Activated CD4-positive, alpha-beta T cell treated with anti-CD3 and anti-CD28 coated beads for 36 hours (primary cell): ENCODE measurements at regions of chr14 and their contacts with region 1.

Region 1: GRCh38 chr14:64279704-64280668 is 14.2 kb downstream of the ESR2 start:
- DNase-seq: peak; percentile 38
- ATAC-seq: peak; percentile 88
- H3K4me3 Mint-ChIP-seq: no peak overlapping the region
- H3K27ac Mint-ChIP-seq: no peak overlapping the region
- H3K4me1 Mint-ChIP-seq: peaks cover 22% of the 10 kb centered on the region
- H3K27me3 Mint-ChIP-seq: no peaks in the 10 kb centered on the region

Region 2: GRCh38 chr14:64109821-64110554 is 170.0 kb before region 1 on chr14:
- CTCF ChIA-PET with region 1: no interaction called
- POLR2A ChIA-PET with region 1: no interaction called
- intact Hi-C with region 1: no loop called
- DNase-seq: no peak
- ATAC-seq: no peak
- H3K4me3 Mint-ChIP-seq: no peak overlapping the region
- H3K27ac Mint-ChIP-seq: no peak overlapping the region
- H3K4me1 Mint-ChIP-seq: no peaks in the 10 kb centered on the region
- H3K27me3 Mint-ChIP-seq: no peaks in the 10 kb centered on the region

Region 3: GRCh38 chr14:64232095-64232838 is 47.7 kb before region 1 on chr14:
- CTCF ChIA-PET with region 1: no interaction called
- POLR2A ChIA-PET with region 1: no interaction called
- intact Hi-C with region 1: loop called in 1 of 2 experiments (anchors 5 kb)
- DNase-seq: peak; percentile 42
- ATAC-seq: peak; percentile 76
- H3K4me3 Mint-ChIP-seq: no peak overlapping the region
- H3K27ac Mint-ChIP-seq: no peak overlapping the region
- H3K4me1 Mint-ChIP-seq: peaks cover 14% of the 10 kb centered on the region
- H3K27me3 Mint-ChIP-seq: no peaks in the 10 kb centered on the region

Region 4: GRCh38 chr14:64421166-64421565 is 141.2 kb after region 1 on chr14:
- CTCF ChIA-PET with region 1: no interaction called
- POLR2A ChIA-PET with region 1: no interaction called
- intact Hi-C with region 1: no loop called
- DNase-seq: no peak
- ATAC-seq: no peak
- H3K4me3 Mint-ChIP-seq: no peak overlapping the region
- H3K27ac Mint-ChIP-seq: no peak overlapping the region
- H3K4me1 Mint-ChIP-seq: peaks cover 12% of the 10 kb centered on the region
- H3K27me3 Mint-ChIP-seq: no peaks in the 10 kb centered on the region

Region 5: DNA sequence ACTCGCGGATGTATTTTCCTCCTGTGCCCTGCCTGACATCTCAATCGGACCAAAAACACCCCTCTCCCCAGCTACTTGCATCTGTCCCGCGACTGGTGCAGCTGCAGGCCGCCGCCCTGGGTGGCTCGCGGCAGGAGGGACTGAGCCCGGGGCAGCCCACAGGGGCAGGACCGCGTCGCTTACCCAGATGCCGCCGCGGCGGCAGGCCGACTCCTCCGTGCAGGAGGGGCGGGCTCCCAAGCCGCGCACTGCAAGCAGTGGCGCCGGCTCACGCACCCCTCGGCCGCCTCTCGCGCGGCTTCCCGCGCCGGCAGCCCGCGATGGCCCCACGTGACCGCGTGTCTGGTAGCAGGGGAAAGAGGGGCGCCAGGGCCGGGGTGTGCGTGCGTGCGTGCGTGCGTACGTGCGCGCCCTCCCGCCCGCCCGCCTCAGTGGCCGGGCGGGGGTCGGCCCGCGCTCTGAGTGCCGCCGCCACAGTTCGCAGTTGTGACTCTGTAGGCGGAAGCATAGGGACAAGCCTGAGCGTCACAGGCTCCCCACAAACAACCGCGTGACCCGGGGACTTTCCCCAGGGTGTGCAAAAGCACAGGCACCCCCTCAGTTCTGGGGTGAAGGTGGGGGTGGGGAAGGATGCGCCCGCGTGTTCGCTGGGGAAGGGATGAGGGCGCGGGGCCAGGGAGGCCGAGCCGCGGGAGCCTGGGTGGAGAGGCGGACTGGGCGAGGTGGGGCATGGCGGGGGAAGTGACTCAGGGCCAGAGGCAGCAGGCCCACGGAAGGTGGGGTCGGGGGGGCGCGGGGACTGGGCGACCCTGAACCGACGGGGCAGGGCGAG is 223.7 kb after region 1 on chr14 and contains the start of gene ZBTB25:
- CTCF ChIA-PET with region 1: no interaction called
- POLR2A ChIA-PET with region 1: no interaction called
- intact Hi-C with region 1: no loop called
- DNase-seq: peak; percentile 97
- ATAC-seq: peak; percentile 66
- H3K4me3 Mint-ChIP-seq: peak within 1 kb of the TSS; percentile 98
- H3K27ac Mint-ChIP-seq: peak within 1 kb of the TSS; percentile 99
- H3K4me1 Mint-ChIP-seq: peaks cover 51% of the 10 kb centered on the region
- H3K27me3 Mint-ChIP-seq: no peaks in the 10 kb centered on the region
- total RNA-seq, gene ZBTB25: 32.7 to 40.0 TPM